CD8-positive, alpha-beta T cell (primary cell): ENCODE measurements at regions of chr19 and their contacts with region 1.

Region 1: DNA sequence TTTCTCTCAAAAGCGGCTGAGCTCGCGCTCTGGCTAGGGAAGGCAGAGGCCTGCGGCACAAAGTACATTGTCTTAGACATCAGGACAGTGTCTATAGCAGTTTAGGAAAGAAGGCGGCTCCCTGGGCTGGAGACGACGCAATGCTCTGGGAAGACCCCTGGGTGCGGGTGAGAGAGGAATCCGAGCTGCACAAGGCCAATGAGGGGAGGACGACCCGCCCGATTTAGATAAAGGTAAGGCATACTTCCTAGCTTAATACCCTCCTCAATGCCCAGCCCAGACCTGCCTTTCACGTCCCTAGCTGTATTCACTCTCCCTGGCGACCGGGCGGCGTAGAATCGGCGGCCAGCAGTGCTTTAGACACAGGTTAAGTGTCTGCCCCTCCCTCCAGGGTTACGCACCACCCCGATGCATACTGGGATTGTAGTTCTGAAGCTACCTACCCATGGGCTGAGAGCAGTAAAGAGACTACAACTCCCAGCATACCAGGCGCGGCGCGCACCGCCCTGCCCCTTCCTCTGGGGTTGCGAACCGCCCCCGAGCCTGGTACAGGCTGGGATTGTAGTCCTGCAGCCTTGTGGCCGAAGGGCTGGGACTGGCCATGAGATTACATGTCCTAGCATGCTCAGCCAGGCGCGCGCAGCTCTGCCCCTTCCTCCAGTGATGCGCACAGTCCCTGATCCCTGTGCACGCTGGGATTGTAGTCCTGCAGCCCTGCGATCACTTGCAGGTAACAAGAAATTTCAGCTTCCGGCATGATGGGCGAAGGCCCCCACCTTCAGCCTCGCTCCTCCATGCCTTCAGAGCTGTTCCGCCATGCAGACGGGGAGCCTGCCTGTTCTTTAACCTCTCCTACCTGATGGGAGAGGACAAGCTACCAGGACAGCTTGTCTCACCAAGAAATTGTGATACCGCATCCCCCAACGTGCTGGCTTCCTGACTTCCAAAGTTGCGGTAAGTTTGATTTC is 43.4 kb upstream of the ZNF14 start:
- DNase-seq: peak; percentile 81 to 96 (median 92)
- ATAC-seq: peak; percentile 99
- H3K4me3 ChIP-seq: peak overlapping the region; percentile 60 to 81
- H3K4me3 Mint-ChIP-seq: peak overlapping the region; percentile 97
- H3K27ac ChIP-seq: peak overlapping the region; percentile 42 to 71
- H3K27ac Mint-ChIP-seq: peak overlapping the region; percentile 98
- H3K4me1 ChIP-seq: peaks cover 17% of the 10 kb centered on the region
- H3K4me1 Mint-ChIP-seq: peaks cover 65% of the 10 kb centered on the region
- H3K27me3 ChIP-seq: no peaks in the 10 kb centered on the region
- H3K27me3 Mint-ChIP-seq: no peaks in the 10 kb centered on the region
- CTCF ChIP-seq: no peak

Region 2: DNA sequence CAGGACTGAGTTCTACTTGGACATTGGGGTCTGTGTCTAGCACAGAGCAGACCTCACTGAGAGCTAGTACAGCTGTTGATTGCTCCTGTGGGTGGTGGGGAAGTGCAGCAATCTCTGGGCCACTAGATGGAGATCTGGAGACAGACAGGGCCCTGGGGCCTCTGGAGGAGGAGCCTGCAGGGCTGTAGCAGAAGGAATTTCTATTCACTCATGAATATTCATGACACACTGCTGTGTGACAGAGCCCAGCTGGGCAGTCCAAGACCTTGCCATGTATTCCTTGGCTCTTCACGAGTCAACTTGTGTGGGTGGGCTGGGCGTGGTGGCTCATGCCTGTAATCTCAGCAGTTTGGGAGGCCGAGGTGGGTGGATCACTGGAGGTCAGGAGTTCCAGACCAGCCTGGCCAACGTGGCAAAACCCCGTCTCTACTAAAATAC is 780.5 kb before region 1 on chr19:
- CTCF ChIA-PET with region 1: no interaction called
- POLR2A ChIA-PET with region 1: no interaction called
- intact Hi-C with region 1: no loop called
- DNase-seq: peak in 2 of 9 experiments; percentile 15 to 27
- ATAC-seq: no peak
- H3K4me3 ChIP-seq: no peak overlapping the region
- H3K4me3 Mint-ChIP-seq: no peak overlapping the region
- H3K27ac ChIP-seq: no peak overlapping the region
- H3K27ac Mint-ChIP-seq: no peak overlapping the region
- H3K4me1 ChIP-seq: peaks cover 21% of the 10 kb centered on the region
- H3K4me1 Mint-ChIP-seq: peaks cover 23% of the 10 kb centered on the region
- H3K27me3 ChIP-seq: no peaks in the 10 kb centered on the region
- H3K27me3 Mint-ChIP-seq: no peaks in the 10 kb centered on the region
- CTCF ChIP-seq: no peak

Region 3: DNA sequence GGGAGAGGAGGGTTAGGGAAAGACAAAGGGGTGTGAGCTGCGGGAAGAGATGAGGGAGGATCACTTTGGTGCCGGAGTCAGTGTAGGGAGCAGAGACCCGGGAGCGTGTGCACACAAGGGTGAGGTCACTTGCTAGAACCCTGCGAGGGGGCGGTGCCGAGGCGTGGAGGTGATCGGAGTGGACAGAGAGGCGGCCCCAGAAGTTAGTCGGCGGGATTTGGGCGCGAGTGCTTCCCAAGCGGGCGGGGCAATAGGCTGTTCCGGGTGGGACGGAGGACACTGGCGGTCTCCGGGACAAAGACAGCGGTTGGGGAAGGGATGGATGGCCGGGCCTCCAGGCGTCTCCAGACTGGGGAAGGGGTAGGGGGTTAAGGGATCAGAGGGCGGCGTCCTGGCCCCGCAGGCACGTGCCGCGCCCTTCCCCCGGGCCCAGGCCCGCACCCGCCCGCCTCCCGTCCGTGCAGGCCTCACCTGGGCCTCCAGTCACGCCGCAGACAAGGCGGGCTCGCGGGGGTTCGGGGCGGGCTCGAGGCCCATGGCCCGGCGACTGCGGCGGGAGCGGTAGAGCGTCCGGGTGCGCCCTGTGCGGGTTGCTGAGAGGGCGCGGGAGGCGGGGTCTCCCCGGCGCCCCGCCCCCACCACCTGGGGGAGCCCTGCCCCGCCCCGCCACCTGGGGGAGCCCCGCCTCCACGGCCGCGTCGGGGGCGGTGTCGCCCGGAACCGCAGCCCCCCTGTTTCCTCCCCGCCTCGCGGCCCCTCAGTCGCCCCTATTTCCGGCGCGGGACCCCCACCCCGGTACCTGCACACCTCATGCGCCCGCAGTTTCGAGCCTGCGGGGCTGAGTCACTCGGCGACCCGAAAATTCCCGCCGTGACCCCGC is 148.5 kb before region 1 on chr19 and contains the start of gene LPAR2:
- CTCF ChIA-PET with region 1: no interaction called
- POLR2A ChIA-PET with region 1: interaction called, 6 read pairs
- intact Hi-C with region 1: loop called in 1 of 2 experiments (anchors 5 kb)
- DNase-seq: peak; percentile 54 to 91 (median 85)
- ATAC-seq: peak; percentile 85
- H3K4me3 ChIP-seq: peak within 1 kb of the TSS; percentile 70 to 73
- H3K4me3 Mint-ChIP-seq: peak within 1 kb of the TSS; percentile 88
- H3K27ac ChIP-seq: peak within 1 kb of the TSS; percentile 64 to 71
- H3K27ac Mint-ChIP-seq: peak within 1 kb of the TSS; percentile 94
- H3K4me1 ChIP-seq: peaks cover 28% of the 10 kb centered on the region
- H3K4me1 Mint-ChIP-seq: peaks cover 30% of the 10 kb centered on the region
- H3K27me3 ChIP-seq: no peaks in the 10 kb centered on the region
- H3K27me3 Mint-ChIP-seq: no peaks in the 10 kb centered on the region
- CTCF ChIP-seq: no peak
- total RNA-seq, gene LPAR2: 63.8 to 67.4 TPM

Region 4: GRCh38 chr19:19788015-19788414 is 11.7 kb after region 1 on chr19:
- CTCF ChIA-PET with region 1: interaction called, 3 read pairs
- POLR2A ChIA-PET with region 1: interaction called, 16 read pairs
- intact Hi-C with region 1: no loop called
- DNase-seq: no peak
- ATAC-seq: no peak
- H3K4me3 ChIP-seq: no peak overlapping the region
- H3K4me3 Mint-ChIP-seq: no peak overlapping the region
- H3K27ac ChIP-seq: no peak overlapping the region
- H3K27ac Mint-ChIP-seq: no peak overlapping the region
- H3K4me1 ChIP-seq: no peaks in the 10 kb centered on the region
- H3K4me1 Mint-ChIP-seq: peaks cover 23% of the 10 kb centered on the region
- H3K27me3 ChIP-seq: no peaks in the 10 kb centered on the region
- H3K27me3 Mint-ChIP-seq: no peaks in the 10 kb centered on the region
- CTCF ChIP-seq: no peak

Region 5: DNA sequence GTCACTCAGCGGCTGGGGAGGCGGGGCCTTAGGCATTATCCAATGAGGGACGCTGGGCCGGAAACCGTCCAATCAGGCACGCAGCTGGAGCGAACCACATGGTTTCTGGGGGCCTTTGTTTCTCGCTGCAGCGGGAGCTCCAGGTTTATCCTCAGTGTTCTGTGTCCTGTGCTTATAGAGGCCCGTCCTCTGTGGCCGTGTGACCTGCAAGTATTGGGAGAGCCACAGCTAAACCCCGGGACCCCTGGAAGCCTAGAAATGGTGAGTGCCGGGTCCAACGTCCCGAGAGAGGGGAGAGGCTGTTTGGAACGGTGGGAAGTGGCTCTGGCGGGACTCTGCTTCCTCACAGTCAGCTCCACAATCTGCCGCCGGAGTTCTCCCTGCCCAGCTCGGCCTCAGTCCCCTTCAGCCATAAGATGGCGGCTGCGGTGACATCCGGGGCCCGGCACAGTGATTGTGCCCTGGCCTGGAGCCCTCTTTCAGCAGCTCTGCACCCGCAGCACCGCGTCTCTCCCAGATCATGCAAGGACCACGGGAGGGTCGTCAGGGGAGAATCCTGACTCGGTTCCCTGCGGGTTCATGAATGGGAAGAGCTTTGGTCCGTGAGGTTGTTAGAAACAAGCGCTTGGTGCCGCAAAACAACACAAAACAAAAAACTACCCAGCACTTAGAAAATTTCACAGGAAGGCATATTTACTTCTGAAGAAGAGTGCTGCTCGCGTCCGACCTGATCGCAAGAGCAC is 89.6 kb after region 1 on chr19 and contains the start of gene ZNF253:
- CTCF ChIA-PET with region 1: interaction called, 3 read pairs
- POLR2A ChIA-PET with region 1: interaction called, 39 read pairs
- intact Hi-C with region 1: loop called (anchors 1 kb)
- DNase-seq: peak; percentile 88 to 97 (median 95)
- ATAC-seq: peak; percentile 93
- H3K4me3 ChIP-seq: peak within 1 kb of the TSS; percentile 89 to 99
- H3K4me3 Mint-ChIP-seq: peak within 1 kb of the TSS; percentile 100
- H3K27ac ChIP-seq: peak within 1 kb of the TSS; percentile 89 to 91
- H3K27ac Mint-ChIP-seq: peak within 1 kb of the TSS; percentile 98
- H3K4me1 ChIP-seq: peaks cover 22% of the 10 kb centered on the region
- H3K4me1 Mint-ChIP-seq: peaks cover 39% of the 10 kb centered on the region
- H3K27me3 ChIP-seq: no peaks in the 10 kb centered on the region
- H3K27me3 Mint-ChIP-seq: no peaks in the 10 kb centered on the region
- CTCF ChIP-seq: no peak
- total RNA-seq, gene ZNF253: 2.6 to 3.2 TPM

Region 6: GRCh38 chr19:20167020-20167644 is 390.8 kb after region 1 on chr19 and contains the start of gene ZNF486:
- CTCF ChIA-PET with region 1: no interaction called
- POLR2A ChIA-PET with region 1: no interaction called
- intact Hi-C with region 1: loop called in 1 of 2 experiments (anchors 10 kb)
- DNase-seq: peak; percentile 83 to 97 (median 92)
- ATAC-seq: peak; percentile 97
- H3K4me3 ChIP-seq: peak within 1 kb of the TSS; percentile 74 to 95
- H3K4me3 Mint-ChIP-seq: peak within 1 kb of the TSS; percentile 97
- H3K27ac ChIP-seq: peak within 1 kb of the TSS; percentile 54 to 80
- H3K27ac Mint-ChIP-seq: peak within 1 kb of the TSS; percentile 92
- H3K4me1 ChIP-seq: peaks cover 13% of the 10 kb centered on the region
- H3K4me1 Mint-ChIP-seq: peaks cover 57% of the 10 kb centered on the region
- H3K27me3 ChIP-seq: no peaks in the 10 kb centered on the region
- H3K27me3 Mint-ChIP-seq: no peaks in the 10 kb centered on the region
- CTCF ChIP-seq: no peak
- total RNA-seq, gene ZNF486: 3.7 to 4.7 TPM